ENCODE measurements at regions of chr2 and their contacts with region 1.

Region 1: DNA sequence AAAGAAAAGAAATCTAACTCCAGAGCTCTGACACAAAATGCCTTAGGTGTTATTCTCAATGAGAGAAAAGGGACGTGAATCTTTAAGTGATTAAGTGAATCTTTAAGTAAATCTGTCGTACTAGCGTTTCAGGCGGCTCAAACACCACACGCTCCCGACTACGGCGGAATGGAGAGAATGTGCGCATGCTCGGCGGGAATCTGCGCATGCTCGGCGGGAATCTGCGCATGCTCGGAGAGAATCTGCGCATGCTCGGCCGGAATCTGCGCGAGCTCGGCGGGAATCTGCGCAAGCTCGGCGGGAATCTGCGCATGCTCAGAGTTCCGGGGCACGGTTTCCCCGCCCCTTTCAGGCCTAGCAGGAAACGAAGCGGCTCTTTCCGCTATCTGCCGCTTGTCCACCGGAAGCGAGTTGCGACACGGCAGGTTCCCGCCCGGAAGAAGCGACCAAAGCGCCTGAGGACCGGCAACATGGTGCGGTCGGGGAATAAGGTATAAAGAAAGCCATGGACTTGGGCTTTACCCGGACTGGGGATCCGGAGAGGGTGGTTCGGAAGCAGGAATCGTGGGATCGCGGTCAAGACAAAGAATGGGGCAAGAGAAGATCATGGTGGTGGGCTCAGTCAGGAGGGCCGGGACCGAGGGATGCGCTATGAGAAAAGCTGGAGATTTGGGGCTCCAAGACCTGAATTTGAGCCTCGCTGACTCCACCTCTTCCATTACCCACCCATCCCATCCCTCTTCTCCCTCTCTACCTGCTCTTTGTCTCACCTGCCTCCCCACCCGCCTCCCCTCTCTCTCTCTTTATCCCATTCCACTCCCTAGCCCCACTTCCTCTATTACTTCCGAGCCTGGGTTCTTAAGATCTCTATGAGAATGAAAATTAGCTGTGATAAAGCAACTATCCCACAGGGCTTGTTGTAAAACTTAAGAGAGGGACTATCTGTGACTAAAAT is at the start of gene XRCC5:
- DNase-seq: peak; percentile 89 to 100 (median 95)
- ATAC-seq: peak; percentile 87 to 89 (median 88)
- H3K4me3 ChIP-seq: peak within 1 kb of the TSS; percentile 99
- H3K4me3 Mint-ChIP-seq: peak within 1 kb of the TSS; percentile 98 to 100 (median 100)
- H3K27ac ChIP-seq: peak within 1 kb of the TSS; percentile 95
- H3K27ac Mint-ChIP-seq: peak within 1 kb of the TSS; percentile 100
- H3K4me1 ChIP-seq: peaks cover 20 to 28% of the 10 kb centered on the region in 2 experiments
- H3K4me1 Mint-ChIP-seq: peaks cover 56 to 61% (median 57%) of the 10 kb centered on the region in 3 donors
- H3K27me3 ChIP-seq: no peaks in the 10 kb centered on the region
- H3K27me3 Mint-ChIP-seq: no peaks in the 10 kb centered on the region
- total RNA-seq, gene XRCC5: 187 to 219 (median 202) TPM

Region 2: GRCh38 chr2:216083464-216084281 is 25.6 kb before region 1 on chr2:
- CTCF ChIA-PET with region 1: interaction called, 5 to 16 read pairs
- POLR2A ChIA-PET with region 1: interaction called, 4 to 5 read pairs
- DNase-seq: peak in 1 of 35 experiments; percentile 7
- ATAC-seq: no peak
- H3K4me3 ChIP-seq: no peak overlapping the region
- H3K4me3 Mint-ChIP-seq: peak overlapping the region; percentile 65 to 99 (median 89)
- H3K27ac ChIP-seq: peak overlapping the region; percentile 76
- H3K27ac Mint-ChIP-seq: peak overlapping the region; percentile 95 to 98
- H3K4me1 ChIP-seq: peaks cover 34 to 53% of the 10 kb centered on the region in 2 experiments
- H3K4me1 Mint-ChIP-seq: peaks cover 62 to 66% (median 66%) of the 10 kb centered on the region in 3 donors
- H3K27me3 ChIP-seq: no peaks in the 10 kb centered on the region
- H3K27me3 Mint-ChIP-seq: no peaks in the 10 kb centered on the region

Measured in T-cell (primary cell).